Endothelial cell of umbilical vein (primary cell): ENCODE measurements at regions of chr3 and their contacts with region 1.

Region 1: GRCh38 chr3:7734456-7734855 is 767.2 kb upstream of the LMCD1 start:
- DNase-seq: peak; percentile 71
- H3K4me3 ChIP-seq: no peak overlapping the region
- H3K27ac ChIP-seq: peak overlapping the region; percentile 85
- H3K4me1 ChIP-seq: peaks cover 33% of the 10 kb centered on the region
- H3K27me3 ChIP-seq: no peaks in the 10 kb centered on the region
- CTCF ChIP-seq: no peak
- POLR2A ChIP-seq: no peak

Region 2: GRCh38 chr3:7682822-7683229 is 51.6 kb before region 1 on chr3:
- CTCF ChIA-PET with region 1: no interaction called
- POLR2A ChIA-PET with region 1: interaction called, 3 read pairs
- dilution Hi-C with region 1: no loop called
- intact Hi-C with region 1: loop called (anchors 1 kb)
- DNase-seq: peak; percentile 97
- H3K4me3 ChIP-seq: no peak overlapping the region
- H3K27ac ChIP-seq: peak overlapping the region; percentile 67
- H3K4me1 ChIP-seq: peaks cover 21% of the 10 kb centered on the region
- H3K27me3 ChIP-seq: no peaks in the 10 kb centered on the region
- CTCF ChIP-seq: no peak
- POLR2A ChIP-seq: no peak